Activated CD4-positive, alpha-beta memory T cell treated with anti-CD3 and anti-CD28 coated beads, Interleukin-2, amount 10 ng/mL, durations not matched to agents 7 days and 5 days (primary cell): ENCODE measurements at regions of chr9 and their contacts with region 1.

Region 1: DNA sequence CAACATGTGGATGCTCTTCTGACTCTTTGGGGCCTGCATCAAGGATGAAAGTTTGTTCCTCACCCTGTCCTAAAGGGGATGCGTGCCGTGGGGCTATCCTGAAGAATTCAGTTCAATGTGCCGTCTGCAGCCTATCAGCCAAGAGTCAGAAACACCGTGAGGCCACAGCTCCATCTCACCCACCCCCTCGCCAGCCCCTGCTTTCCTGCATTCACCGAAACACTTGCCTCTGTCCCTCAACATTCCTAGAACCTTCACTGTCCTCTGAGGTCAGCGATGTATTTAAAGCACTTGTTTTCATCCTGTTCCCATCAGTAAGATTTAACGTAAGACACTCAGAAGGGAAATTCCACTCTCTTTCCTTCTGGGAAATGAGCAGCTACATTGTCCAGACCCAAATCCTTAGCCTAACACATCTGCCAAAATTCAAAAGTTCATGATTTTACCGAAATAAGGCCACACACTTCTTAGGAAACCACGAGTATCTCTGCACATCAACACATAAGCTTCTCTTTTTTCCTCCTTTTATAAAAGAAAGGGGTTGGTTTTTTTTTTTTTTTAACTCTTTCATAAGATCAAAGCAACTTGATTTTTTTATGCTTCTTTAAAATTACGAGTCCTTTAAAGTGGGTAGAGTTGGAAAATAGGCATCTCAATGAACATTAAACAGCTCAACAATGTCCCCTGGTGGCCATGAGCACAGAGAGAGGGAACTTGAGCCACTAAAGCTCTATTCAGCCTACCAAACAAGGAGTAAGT is 100.7 kb downstream of the SUSD1 start:
- DNase-seq: peak; percentile 71
- H3K4me3 Mint-ChIP-seq: no peak overlapping the region
- H3K27ac Mint-ChIP-seq: no peak overlapping the region
- H3K4me1 Mint-ChIP-seq: peaks cover 19% of the 10 kb centered on the region
- H3K27me3 Mint-ChIP-seq: peaks cover 2% of the 10 kb centered on the region

Region 2: GRCh38 chr9:111759762-111760639 is 314.4 kb before region 1 on chr9:
- CTCF ChIA-PET with region 1: interaction called, 117 read pairs
- POLR2A ChIA-PET with region 1: interaction called, 5 read pairs
- DNase-seq: peak; percentile 40
- H3K4me3 Mint-ChIP-seq: no peak overlapping the region
- H3K27ac Mint-ChIP-seq: no peak overlapping the region
- H3K4me1 Mint-ChIP-seq: peaks cover 1% of the 10 kb centered on the region
- H3K27me3 Mint-ChIP-seq: no peaks in the 10 kb centered on the region

Region 3: GRCh38 chr9:111825468-111826145 is 248.8 kb before region 1 on chr9:
- CTCF ChIA-PET with region 1: interaction called, 13 read pairs
- POLR2A ChIA-PET with region 1: no interaction called
- DNase-seq: no peak
- H3K4me3 Mint-ChIP-seq: no peak overlapping the region
- H3K27ac Mint-ChIP-seq: no peak overlapping the region
- H3K4me1 Mint-ChIP-seq: no peaks in the 10 kb centered on the region
- H3K27me3 Mint-ChIP-seq: peaks cover 1% of the 10 kb centered on the region